Right ventricle myocardium inferior (tissue), 1 donor: ENCODE measurements at regions of chr7 and their contacts with region 1.

Region 1: GRCh38 chr7:151185762-151186631 is 1.1 kb downstream of the ASB10 start:
- DNase-seq: peak; percentile 44
- ATAC-seq: peak; percentile 14

Region 2: GRCh38 chr7:151226875-151227782 is 41.1 kb after region 1 on chr7 and contains the start of gene ABCF2:
- intact Hi-C with region 1: loop called (anchors 2 kb)
- DNase-seq: peak; percentile 100
- ATAC-seq: peak; percentile 100
- total RNA-seq, gene ABCF2: 24.5 TPM

Region 3: DNA sequence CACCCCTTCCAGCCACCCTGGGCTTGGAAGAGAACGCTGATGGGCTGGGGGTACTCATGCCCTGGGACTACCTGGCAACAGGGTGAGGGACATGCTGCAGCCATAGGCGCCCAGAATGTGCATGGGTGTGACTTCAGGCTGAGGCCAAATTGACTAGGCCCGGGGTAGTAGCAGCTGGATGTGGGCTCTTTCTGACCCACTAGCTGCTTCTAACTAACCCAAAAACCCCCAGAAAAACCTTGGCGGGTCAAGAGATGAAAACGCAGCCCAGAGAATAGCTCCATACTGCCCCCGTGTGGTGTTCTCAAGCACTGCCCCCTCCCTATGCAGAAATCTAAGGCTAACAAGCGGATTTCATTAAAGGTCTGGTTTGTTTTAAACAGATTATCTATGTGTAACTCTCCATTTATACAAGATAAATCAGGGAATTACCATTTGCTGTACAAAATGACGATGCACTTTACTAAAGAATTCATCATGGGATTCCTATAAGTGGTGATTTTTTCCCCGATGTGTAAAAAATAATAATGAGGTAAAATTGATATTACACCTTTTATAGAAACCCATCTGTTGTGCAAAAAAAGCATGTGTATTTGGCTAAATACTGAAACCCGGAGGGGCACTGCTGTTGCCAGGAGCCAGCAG is 58.3 kb after region 1 on chr7:
- intact Hi-C with region 1: loop called (anchors 5 kb)
- DNase-seq: peak; percentile 65
- ATAC-seq: no peak

Region 4: DNA sequence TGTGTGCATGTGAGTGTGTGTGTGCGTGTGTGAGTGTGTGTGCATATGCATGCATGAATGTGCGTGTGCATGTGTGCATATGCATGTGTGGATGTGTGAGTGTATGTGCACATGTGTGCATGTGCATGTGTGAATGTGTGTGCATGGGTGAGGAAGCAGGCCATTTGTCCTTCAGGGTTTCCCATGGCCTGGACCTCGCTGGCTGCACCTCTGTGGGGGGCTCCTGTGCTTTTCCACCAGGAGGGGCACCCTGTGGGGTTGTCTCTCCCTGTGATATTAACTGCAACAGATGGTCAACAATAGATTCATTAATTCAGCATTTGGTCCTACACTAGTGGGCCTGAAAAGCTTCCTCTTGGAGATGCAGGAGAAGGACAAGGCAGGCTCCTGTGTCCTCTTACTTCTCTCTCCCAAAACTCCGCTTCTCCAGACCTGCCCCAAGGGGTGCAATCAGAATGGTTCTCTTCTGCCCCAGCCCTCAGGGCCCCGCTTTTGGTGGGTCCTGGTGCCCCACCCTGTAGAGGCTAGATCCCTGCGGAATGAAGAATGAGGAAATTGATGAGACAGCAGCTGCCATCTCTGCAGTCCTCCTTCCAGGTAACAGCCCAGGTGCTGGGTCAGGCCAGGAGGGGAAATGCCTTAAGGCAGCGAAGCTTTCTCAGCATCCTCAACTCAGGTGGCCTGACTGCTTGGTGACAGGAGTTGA is 114.1 kb after region 1 on chr7:
- intact Hi-C with region 1: no loop called
- DNase-seq: no peak
- ATAC-seq: no peak